ENCODE measurements at regions of chr20 and their contacts with region 1.

Region 1: DNA sequence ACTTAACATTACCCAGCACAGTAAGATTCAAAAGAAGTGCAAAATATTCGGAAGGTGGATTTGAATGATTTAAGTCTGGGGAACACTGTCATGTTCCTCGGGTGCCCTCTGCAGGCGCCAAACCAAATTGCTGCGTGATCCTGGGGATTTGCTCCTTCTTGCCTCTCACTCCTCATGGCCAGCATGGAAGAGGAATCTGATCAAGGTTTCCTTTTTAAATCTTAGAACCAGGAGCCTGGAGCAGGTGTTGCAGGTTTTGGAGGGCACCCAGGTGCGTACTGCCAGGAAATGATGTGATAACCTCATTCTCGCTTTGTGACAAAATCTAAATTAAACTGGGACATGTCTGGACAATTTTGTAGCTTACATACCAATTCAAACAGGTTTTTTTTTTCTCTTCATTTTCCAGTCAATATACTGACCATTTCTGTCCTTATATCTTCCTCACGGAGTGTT is 8.1 kb upstream of the PFDN4 start:
- DNase-seq: peak; percentile 46 to 80 (median 69)
- ATAC-seq: peak; percentile 63
- H3K4me3 ChIP-seq: no peak overlapping the region
- H3K4me3 Mint-ChIP-seq: no peak overlapping the region
- H3K27ac ChIP-seq: no peak overlapping the region
- H3K27ac Mint-ChIP-seq: no peak overlapping the region
- H3K4me1 ChIP-seq: no peaks in the 10 kb centered on the region
- H3K4me1 Mint-ChIP-seq: no peaks in the 10 kb centered on the region
- H3K27me3 ChIP-seq: no peaks in the 10 kb centered on the region
- H3K27me3 Mint-ChIP-seq: peaks cover 2% of the 10 kb centered on the region
- CTCF ChIP-seq: peak; percentile 95

Region 2: DNA sequence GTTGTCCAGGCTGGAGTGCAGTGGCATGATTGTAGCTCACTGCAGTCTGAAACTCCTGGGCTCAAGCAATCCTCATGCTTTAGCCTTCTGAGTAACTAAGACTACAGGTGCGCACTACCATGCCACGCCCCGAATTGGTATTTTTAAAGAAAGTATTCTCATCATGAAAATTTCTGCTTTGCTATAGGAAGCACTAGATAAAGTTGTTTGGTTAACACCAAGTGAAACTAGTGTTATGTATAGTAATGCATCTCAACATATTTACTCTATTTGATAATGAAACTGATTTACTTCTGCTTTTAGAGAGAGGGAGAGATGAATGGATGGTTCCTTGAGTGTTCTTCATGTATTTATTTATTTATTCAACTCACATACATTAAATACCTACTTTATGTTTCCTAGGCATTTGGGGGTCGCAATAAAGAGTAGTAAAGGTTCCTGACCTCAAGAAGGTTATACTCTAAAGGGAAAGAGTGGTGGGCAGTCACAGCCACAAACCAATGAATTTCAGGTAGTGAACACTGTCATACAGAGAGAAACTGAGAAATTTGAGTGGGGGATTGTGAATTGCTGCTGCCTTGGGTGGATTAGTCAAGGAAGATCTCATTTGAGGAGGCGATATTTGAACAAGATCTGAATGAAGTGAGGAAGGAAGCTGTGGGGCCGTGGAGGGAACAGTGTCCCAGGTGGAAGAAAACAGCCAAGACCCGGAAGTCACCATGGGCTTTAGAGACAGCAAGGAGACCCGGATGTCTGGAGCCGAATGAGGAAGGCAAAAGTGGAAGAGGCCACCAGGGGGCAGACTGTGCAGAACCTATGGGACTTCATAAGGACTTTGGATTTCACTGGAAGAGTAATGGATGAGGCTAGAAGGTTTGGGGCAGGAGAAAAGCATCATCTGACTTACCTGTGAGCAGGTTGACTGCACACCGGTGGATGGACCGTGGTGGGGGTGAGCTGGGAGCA is 1042.0 kb before region 1 on chr20:
- CTCF ChIA-PET with region 1: no interaction called
- POLR2A ChIA-PET with region 1: no interaction called
- intact Hi-C with region 1: loop called in 1 of 2 experiments (anchors 5 kb)
- DNase-seq: peak in 8 of 9 experiments; percentile 2 to 67 (median 46)
- ATAC-seq: no peak
- H3K4me3 ChIP-seq: no peak overlapping the region
- H3K4me3 Mint-ChIP-seq: no peak overlapping the region
- H3K27ac ChIP-seq: no peak overlapping the region
- H3K27ac Mint-ChIP-seq: no peak overlapping the region
- H3K4me1 ChIP-seq: no peaks in the 10 kb centered on the region
- H3K4me1 Mint-ChIP-seq: no peaks in the 10 kb centered on the region
- H3K27me3 ChIP-seq: peaks cover 0 to 2% of the 10 kb centered on the region in 2 experiments
- H3K27me3 Mint-ChIP-seq: peaks cover 6% of the 10 kb centered on the region
- CTCF ChIP-seq: peak; percentile 46

Region 3: GRCh38 chr20:53413186-53413631 is 786.5 kb before region 1 on chr20:
- CTCF ChIA-PET with region 1: no interaction called
- POLR2A ChIA-PET with region 1: no interaction called
- intact Hi-C with region 1: loop called in 1 of 2 experiments (anchors 5 kb)
- DNase-seq: peak; percentile 23 to 75 (median 53)
- ATAC-seq: no peak
- H3K4me3 ChIP-seq: no peak overlapping the region
- H3K4me3 Mint-ChIP-seq: peak overlapping the region; percentile 53
- H3K27ac ChIP-seq: no peak overlapping the region
- H3K27ac Mint-ChIP-seq: peak overlapping the region; percentile 32
- H3K4me1 ChIP-seq: peaks cover 4% of the 10 kb centered on the region
- H3K4me1 Mint-ChIP-seq: peaks cover 6% of the 10 kb centered on the region
- H3K27me3 ChIP-seq: no peaks in the 10 kb centered on the region
- H3K27me3 Mint-ChIP-seq: peaks cover 3% of the 10 kb centered on the region
- CTCF ChIP-seq: peak; percentile 51

Region 4: GRCh38 chr20:53949319-53949889 is 250.3 kb before region 1 on chr20:
- CTCF ChIA-PET with region 1: interaction called, 3 read pairs
- POLR2A ChIA-PET with region 1: no interaction called
- intact Hi-C with region 1: loop called (anchors 5 kb)
- DNase-seq: peak; percentile 55 to 94 (median 80)
- ATAC-seq: peak; percentile 88
- H3K4me3 ChIP-seq: peak overlapping the region; percentile 4 to 10
- H3K4me3 Mint-ChIP-seq: peak overlapping the region; percentile 76
- H3K27ac ChIP-seq: peak overlapping the region; percentile 68 to 70
- H3K27ac Mint-ChIP-seq: peak overlapping the region; percentile 98
- H3K4me1 ChIP-seq: peaks cover 26% of the 10 kb centered on the region
- H3K4me1 Mint-ChIP-seq: peaks cover 36% of the 10 kb centered on the region
- H3K27me3 ChIP-seq: no peaks in the 10 kb centered on the region
- H3K27me3 Mint-ChIP-seq: no peaks in the 10 kb centered on the region
- CTCF ChIP-seq: no peak

Region 5: GRCh38 chr20:54103067-54103761 is 96.5 kb before region 1 on chr20:
- CTCF ChIA-PET with region 1: interaction called, 40 read pairs
- POLR2A ChIA-PET with region 1: no interaction called
- intact Hi-C with region 1: no loop called
- DNase-seq: peak; percentile 37 to 77 (median 69)
- ATAC-seq: no peak
- H3K4me3 ChIP-seq: no peak overlapping the region
- H3K4me3 Mint-ChIP-seq: no peak overlapping the region
- H3K27ac ChIP-seq: no peak overlapping the region
- H3K27ac Mint-ChIP-seq: no peak overlapping the region
- H3K4me1 ChIP-seq: no peaks in the 10 kb centered on the region
- H3K4me1 Mint-ChIP-seq: peaks cover 2% of the 10 kb centered on the region
- H3K27me3 ChIP-seq: no peaks in the 10 kb centered on the region
- H3K27me3 Mint-ChIP-seq: peaks cover 9% of the 10 kb centered on the region
- CTCF ChIP-seq: peak; percentile 92

Region 6: DNA sequence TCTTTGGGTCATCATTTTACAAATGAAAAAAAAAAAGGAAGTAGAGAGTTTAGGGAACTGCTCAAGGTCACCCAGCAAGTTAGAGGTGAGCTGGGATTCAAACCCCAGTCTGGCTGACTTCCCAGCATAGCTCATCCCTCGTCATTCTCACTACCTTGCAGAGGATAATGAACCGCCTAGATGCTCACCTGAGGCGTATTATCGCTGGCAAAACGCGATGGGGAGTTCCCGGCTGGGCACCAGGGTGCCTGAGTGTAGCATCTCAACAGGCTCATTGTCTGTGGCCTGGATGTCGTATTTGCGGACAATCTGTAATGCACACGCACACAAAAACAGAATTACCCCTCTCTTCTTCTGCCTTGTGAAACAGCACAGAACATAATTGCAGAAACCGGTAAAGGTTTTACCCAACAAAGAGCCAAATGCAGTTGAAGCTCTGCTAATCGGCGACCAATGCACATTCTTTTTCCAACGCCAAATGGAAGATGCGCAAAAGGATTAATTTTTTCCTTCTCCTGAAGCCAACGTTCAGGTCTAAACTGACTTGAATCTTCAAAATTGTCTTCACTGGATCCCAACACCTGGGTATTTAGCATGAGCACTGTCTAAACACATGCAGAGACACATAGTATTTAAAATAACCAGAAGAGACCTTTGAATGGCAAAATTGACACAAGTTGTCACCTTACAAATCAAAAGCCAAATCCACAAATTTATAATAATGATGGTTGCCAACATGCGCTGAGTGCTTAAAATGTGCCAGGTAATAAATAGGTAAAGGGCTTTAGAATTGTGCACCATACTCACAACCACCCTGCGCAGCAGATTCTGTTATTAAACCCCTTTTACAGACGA is 42.5 kb before region 1 on chr20:
- CTCF ChIA-PET with region 1: no interaction called
- POLR2A ChIA-PET with region 1: no interaction called
- intact Hi-C with region 1: no loop called
- DNase-seq: no peak
- ATAC-seq: no peak
- H3K4me3 ChIP-seq: no peak overlapping the region
- H3K4me3 Mint-ChIP-seq: no peak overlapping the region
- H3K27ac ChIP-seq: no peak overlapping the region
- H3K27ac Mint-ChIP-seq: no peak overlapping the region
- H3K4me1 ChIP-seq: no peaks in the 10 kb centered on the region
- H3K4me1 Mint-ChIP-seq: no peaks in the 10 kb centered on the region
- H3K27me3 ChIP-seq: no peaks in the 10 kb centered on the region
- H3K27me3 Mint-ChIP-seq: peaks cover 19% of the 10 kb centered on the region
- CTCF ChIP-seq: no peak